ENCODE measurements at regions of chr4 and their contacts with region 1.

Region 1: DNA sequence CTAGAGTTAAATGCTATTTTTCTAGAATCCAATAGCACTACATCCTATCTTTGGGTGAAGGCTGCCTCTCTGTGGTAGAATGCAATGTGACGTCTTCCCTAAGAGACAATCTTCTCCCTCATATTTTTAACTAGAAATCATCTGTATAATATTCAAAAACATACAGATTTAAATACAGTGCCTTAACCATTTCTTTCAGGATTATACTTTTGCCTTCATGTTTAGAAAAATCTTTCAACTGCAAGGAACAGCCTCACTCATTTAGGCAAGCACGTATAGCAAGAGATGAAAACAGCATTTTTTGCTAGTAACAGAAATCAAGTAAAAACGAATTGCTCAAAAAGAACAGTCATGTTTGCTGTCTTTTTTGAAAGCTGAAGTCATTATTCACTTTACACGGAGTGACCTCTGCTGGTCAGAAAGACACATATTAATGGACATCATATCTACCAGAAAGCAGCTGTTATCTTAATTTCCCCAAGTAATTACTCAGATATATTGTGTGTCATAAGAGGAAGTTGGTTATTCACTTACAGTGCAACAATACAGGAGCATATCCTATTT is 422.3 kb downstream of the STPG2 start:
- DNase-seq: peak; percentile 2
- H3K4me3 Mint-ChIP-seq: no peak overlapping the region
- H3K27ac Mint-ChIP-seq: no peak overlapping the region
- H3K4me1 Mint-ChIP-seq: no peaks in the 10 kb centered on the region
- H3K27me3 Mint-ChIP-seq: no peaks in the 10 kb centered on the region
- CTCF ChIP-seq: no peak

Region 2: DNA sequence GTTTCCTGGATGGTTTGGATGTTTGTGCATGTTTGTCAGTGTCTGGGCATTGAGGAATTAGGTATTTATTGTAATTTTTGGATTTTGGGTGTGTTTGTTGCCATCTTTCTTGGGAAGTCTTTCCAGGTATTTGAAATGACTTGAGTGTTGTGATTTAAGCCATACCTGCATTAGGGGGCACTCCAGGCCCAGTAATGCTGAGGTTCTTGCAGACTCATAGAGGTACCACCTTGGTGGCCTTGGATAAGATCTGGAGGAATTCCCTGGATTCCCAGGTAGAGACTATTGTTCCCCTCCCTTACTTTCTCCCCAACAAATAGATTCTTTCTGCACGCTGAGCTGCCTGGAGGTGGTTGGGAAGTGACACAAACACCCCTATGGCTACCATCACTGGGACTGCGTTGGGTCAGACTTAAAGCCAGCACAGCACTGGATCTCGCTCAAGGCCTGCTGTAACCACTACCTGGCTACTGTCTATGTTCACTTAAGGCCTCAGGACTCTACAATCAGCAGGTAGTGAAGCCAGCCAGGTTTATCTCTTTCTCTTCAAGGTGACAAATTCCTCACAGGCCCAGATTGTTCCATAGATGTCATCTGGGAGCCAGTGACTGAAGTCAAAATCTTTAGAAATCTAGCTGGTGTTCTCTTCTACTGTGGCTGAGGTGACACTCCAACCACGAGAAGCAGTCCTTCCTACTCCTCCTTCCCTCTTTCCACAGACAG is 1237.5 kb before region 1 on chr4:
- CTCF ChIA-PET with region 1: no interaction called
- intact Hi-C with region 1: loop called (anchors 10 kb)
- DNase-seq: no peak
- H3K4me3 Mint-ChIP-seq: no peak overlapping the region
- H3K27ac Mint-ChIP-seq: no peak overlapping the region
- H3K4me1 Mint-ChIP-seq: no peaks in the 10 kb centered on the region
- H3K27me3 Mint-ChIP-seq: no peaks in the 10 kb centered on the region
- CTCF ChIP-seq: no peak

Region 3: GRCh38 chr4:97987019-97987648 is 266.2 kb after region 1 on chr4:
- CTCF ChIA-PET with region 1: interaction called, 4 read pairs
- intact Hi-C with region 1: loop called (anchors 5 kb)
- DNase-seq: no peak
- H3K4me3 Mint-ChIP-seq: no peak overlapping the region
- H3K27ac Mint-ChIP-seq: no peak overlapping the region
- H3K4me1 Mint-ChIP-seq: no peaks in the 10 kb centered on the region
- H3K27me3 Mint-ChIP-seq: no peaks in the 10 kb centered on the region
- CTCF ChIP-seq: peak; percentile 26